GM12878 (cell line): ENCODE measurements at regions of chr9 and their contacts with region 1.

Region 1: DNA sequence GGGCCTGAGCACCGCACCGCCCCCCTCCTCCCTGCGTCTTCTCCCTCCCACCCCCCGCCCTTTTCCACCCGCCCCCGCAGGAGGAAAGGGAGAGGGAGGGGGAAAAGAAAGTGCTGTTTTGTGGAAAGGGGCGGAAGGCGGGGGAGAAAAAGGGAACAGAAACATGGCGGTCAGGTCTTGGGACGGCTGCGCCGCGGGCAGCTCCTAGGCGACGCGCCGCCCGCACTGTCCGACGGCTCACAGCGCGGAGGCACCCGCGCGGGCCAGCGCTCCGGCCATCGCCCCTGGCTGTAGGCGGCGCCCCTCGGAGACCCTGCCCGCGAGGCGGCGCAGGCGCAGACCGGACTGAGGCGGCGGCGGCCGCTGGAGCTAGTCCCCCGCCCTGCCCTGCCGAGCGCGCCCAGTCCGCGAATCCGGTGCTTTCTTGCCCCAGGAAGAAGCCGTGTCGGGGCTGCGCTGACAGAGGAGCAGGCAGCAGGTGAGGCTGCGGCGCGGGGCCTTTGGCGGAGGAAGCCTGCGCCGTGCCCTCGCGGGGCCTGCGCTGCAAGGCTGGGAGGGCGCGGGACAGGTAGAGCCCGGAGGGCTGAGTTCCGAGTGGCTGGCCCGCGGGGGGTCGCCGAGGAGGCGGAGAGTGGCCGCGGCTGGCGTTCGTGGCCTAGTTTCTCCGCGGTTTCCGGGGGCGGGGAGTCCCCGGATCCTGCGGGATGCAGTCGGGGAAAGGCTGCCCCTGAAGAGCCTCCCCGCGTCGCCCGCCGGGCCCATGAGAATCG is at the start of gene DENND4C:
- DNase-seq: peak; percentile 66
- ATAC-seq: peak; percentile 90
- H3K4me3 ChIP-seq: peak within 1 kb of the TSS; percentile 79
- H3K27ac ChIP-seq: peak within 1 kb of the TSS; percentile 94
- H3K4me1 ChIP-seq: no peaks in the 10 kb centered on the region; the same call in 1 of the 2 replicates
- H3K27me3 ChIP-seq: no peaks in the 10 kb centered on the region
- CTCF ChIP-seq: peak in 1 of 3 experiments; percentile 24; a peak in 1 of 6 replicates
- EP300 ChIP-seq: peak; percentile 58 to 87
- POLR2A ChIP-seq: peak; percentile 92
- RAD21 ChIP-seq: no peak
- polyA plus RNA-seq, gene DENND4C: 8.2 to 10.1 TPM

Region 2: GRCh38 chr9:19048966-19049916 is 181.3 kb before region 1 on chr9 and contains the start of gene RRAGA:
- CTCF ChIA-PET with region 1: interaction called, 3 read pairs
- POLR2A ChIA-PET with region 1: interaction called, 7 read pairs
- RAD21 ChIA-PET with region 1: no interaction called
- SMC1A ChIA-PET with region 1: interaction called, 10 read pairs
- in situ Hi-C with region 1: no loop called
- intact Hi-C with region 1: loop called (anchors 2 kb)
- DNase-seq: peak; percentile 90
- ATAC-seq: peak; percentile 93
- H3K4me3 ChIP-seq: peak within 1 kb of the TSS; percentile 88
- H3K27ac ChIP-seq: peak within 1 kb of the TSS; percentile 82
- H3K4me1 ChIP-seq: peaks cover 5% of the 10 kb centered on the region
- H3K27me3 ChIP-seq: no peaks in the 10 kb centered on the region
- CTCF ChIP-seq: peak; percentile 74 to 89 (median 79)
- EP300 ChIP-seq: peak; percentile 28 to 54; a peak in 1 of 4 replicates
- POLR2A ChIP-seq: peak; percentile 95
- RAD21 ChIP-seq: peak; percentile 36; the same call in 1 of the 2 replicates
- polyA plus RNA-seq, gene RRAGA: 10.1 to 19.3 TPM

Region 3: GRCh38 chr9:19127881-19128500 is 102.5 kb before region 1 on chr9:
- CTCF ChIA-PET with region 1: no interaction called
- POLR2A ChIA-PET with region 1: interaction called, 7 read pairs
- RAD21 ChIA-PET with region 1: interaction called, 7 read pairs
- SMC1A ChIA-PET with region 1: no interaction called
- in situ Hi-C with region 1: no loop called
- intact Hi-C with region 1: loop called (anchors 1 kb)
- DNase-seq: no peak
- ATAC-seq: peak; percentile 35
- H3K4me3 ChIP-seq: peak overlapping the region; percentile 77
- H3K27ac ChIP-seq: peak overlapping the region; percentile 85
- H3K4me1 ChIP-seq: peaks cover 23% of the 10 kb centered on the region
- H3K27me3 ChIP-seq: no peaks in the 10 kb centered on the region
- CTCF ChIP-seq: no peak
- EP300 ChIP-seq: no peak
- POLR2A ChIP-seq: no peak; the same call in 1 of the 2 replicates
- RAD21 ChIP-seq: no peak

Region 4: DNA sequence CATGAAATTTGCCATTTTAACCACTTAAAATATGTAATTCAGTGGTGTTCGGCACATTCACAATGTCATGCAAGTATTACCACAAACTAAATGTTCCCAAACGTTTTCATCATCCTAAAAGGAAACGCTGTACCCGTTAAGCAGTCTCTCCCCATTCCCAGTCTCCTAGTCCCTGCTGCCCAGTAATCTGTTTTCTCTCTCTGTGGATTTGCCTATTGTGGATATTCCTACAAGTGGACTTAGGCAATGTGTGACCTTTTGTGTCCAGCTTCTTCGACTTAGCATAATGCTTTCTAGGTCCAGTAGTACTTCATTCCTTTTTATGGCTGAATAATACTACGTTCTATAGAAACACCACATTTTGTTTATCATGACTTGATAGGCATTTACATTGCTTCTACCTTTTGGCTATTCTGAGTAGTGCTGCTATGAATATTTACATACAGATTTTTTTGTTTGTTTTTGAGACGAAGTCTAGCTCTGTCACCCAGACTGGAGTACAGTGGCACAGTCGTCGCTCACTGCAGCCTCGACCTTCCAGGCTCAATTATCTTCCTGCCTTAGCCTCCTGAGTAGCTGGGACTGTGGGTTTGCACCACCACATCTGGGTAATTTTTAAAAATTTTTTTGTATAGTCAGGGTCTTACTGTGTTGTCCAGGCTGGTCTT is 13.0 kb after region 1 on chr9:
- CTCF ChIA-PET with region 1: interaction called, 9 read pairs
- POLR2A ChIA-PET with region 1: interaction called, 14 read pairs
- RAD21 ChIA-PET with region 1: interaction called, 10 read pairs
- SMC1A ChIA-PET with region 1: interaction called, 6 read pairs
- in situ Hi-C with region 1: no loop called
- intact Hi-C with region 1: no loop called
- DNase-seq: no peak
- ATAC-seq: no peak
- H3K4me3 ChIP-seq: no peak overlapping the region
- H3K27ac ChIP-seq: no peak overlapping the region
- H3K4me1 ChIP-seq: no peaks in the 10 kb centered on the region
- H3K27me3 ChIP-seq: no peaks in the 10 kb centered on the region
- CTCF ChIP-seq: no peak
- EP300 ChIP-seq: no peak
- POLR2A ChIP-seq: no peak
- RAD21 ChIP-seq: no peak

Region 5: DNA sequence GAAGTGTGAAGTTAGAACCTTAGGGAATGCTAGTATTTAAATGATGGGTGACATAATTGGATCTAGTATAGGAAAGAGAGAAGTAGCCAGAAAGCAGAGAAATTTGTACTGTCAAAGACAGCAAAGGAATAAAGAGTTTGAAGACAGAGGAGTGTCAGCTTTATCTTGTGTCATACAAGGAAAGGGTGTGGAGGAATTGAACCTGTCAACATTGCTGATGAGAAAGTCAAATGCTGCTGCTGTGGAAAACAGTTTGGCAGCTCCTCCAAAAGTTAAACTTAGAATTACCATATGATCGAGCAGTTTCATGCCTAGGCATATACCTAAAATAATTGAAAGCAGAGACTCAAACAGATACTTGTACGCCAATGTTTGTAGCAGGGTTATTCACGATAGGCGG is 63.7 kb after region 1 on chr9:
- CTCF ChIA-PET with region 1: interaction called, 3 read pairs
- POLR2A ChIA-PET with region 1: interaction called, 3 read pairs
- RAD21 ChIA-PET with region 1: interaction called, 5 read pairs
- SMC1A ChIA-PET with region 1: interaction called, 5 read pairs
- in situ Hi-C with region 1: no loop called
- intact Hi-C with region 1: loop called (anchors 5 kb)
- DNase-seq: no peak
- ATAC-seq: no peak
- H3K4me3 ChIP-seq: no peak overlapping the region
- H3K27ac ChIP-seq: no peak overlapping the region
- H3K4me1 ChIP-seq: no peaks in the 10 kb centered on the region
- H3K27me3 ChIP-seq: no peaks in the 10 kb centered on the region
- CTCF ChIP-seq: no peak
- EP300 ChIP-seq: no peak
- POLR2A ChIP-seq: no peak
- RAD21 ChIP-seq: no peak

Region 6: GRCh38 chr9:19456996-19457692 is 226.6 kb after region 1 on chr9:
- CTCF ChIA-PET with region 1: interaction called, 13 read pairs
- POLR2A ChIA-PET with region 1: interaction called, 3 read pairs
- RAD21 ChIA-PET with region 1: interaction called, 19 read pairs
- SMC1A ChIA-PET with region 1: interaction called, 8 read pairs
- in situ Hi-C with region 1: no loop called
- intact Hi-C with region 1: loop called (anchors 5 kb)
- DNase-seq: peak; percentile 46
- ATAC-seq: peak; percentile 93
- H3K4me3 ChIP-seq: peak overlapping the region; percentile 47; the same call in 1 of the 2 replicates
- H3K27ac ChIP-seq: no peak overlapping the region
- H3K4me1 ChIP-seq: peaks cover 6% of the 10 kb centered on the region
- H3K27me3 ChIP-seq: no peaks in the 10 kb centered on the region
- CTCF ChIP-seq: peak; percentile 86 to 93 (median 92)
- EP300 ChIP-seq: no peak
- POLR2A ChIP-seq: no peak
- RAD21 ChIP-seq: peak; percentile 90